ENCODE measurements at regions of chr1 and their contacts with region 1.

Region 1: DNA sequence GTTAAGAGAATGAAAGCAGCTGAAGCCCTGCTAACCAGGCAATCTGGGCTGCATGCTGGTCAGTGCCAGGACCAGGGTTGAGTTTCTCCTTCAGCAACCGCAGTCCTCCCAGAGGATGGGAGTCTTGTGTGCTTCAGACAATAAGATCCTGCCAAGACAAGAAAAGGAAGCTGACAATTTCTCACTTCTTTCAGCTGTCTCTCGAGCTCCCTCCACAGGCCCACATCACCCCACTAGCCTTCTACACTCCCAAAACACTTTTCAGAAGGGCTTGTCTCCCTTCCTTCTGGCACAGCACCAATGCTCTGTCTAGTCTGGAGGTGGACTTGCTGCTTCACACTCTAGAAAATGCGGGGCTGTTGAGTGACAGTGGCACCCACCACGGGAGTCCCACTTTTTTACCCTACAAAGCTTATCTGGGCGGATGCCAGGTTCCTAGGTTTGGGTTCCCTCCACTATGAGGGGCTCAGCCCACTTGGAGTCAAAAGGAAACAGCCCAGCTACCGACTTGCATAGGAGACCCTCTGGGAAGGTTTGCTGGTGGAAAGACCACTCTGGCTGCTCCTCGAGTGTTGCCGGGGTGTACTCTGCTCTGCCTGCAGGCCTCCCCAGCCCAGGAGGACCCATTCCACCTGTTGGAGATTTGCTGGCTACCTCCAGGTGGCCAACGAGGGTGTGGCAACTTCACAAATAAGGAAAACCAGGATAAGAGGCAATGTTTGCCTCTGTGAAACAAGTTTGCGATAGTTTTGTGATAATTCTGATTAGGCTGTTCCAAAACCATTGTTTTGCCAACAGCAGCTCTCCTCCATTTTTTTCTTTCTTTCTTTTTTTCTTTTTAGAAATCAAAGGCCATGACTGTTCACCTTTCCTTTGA is 68.9 kb downstream of the TENT5C start:
- DNase-seq: peak; percentile 22 to 42
- H3K4me3 ChIP-seq: no peak overlapping the region
- H3K27ac ChIP-seq: no peak overlapping the region
- H3K4me1 ChIP-seq: peaks cover 0 to 16% of the 10 kb centered on the region in 2 donors
- H3K27me3 ChIP-seq: no peaks in the 10 kb centered on the region
- CTCF ChIP-seq: peak in 2 of 6 experiments; percentile 19 to 32
- POLR2A ChIP-seq: no peak

Region 2: DNA sequence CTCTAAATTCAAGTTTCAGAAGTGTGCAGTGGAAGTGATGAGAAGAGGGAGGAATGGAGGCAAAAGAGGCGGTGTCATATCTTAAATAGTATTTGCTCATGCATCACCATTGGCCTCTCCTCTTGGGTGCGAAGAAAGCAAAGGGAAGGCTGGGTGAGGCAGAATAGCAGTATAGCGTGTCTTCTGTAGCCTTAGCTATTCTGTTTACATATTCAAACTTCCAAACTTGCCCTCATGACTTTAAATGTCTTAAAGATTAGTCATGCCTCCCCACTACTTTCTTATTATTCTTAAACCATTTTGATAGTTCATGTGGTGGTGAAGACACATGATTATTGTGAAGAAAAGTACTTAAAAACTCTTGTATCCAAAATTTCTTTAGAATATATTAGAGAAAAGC is 173.5 kb before region 1 on chr1:
- intact Hi-C with region 1: no loop called
- DNase-seq: no peak
- H3K4me3 ChIP-seq: no peak overlapping the region
- H3K27ac ChIP-seq: no peak overlapping the region
- H3K4me1 ChIP-seq: no peaks in the 10 kb centered on the region
- H3K27me3 ChIP-seq: no peaks in the 10 kb centered on the region
- CTCF ChIP-seq: no peak
- POLR2A ChIP-seq: no peak

Region 3: DNA sequence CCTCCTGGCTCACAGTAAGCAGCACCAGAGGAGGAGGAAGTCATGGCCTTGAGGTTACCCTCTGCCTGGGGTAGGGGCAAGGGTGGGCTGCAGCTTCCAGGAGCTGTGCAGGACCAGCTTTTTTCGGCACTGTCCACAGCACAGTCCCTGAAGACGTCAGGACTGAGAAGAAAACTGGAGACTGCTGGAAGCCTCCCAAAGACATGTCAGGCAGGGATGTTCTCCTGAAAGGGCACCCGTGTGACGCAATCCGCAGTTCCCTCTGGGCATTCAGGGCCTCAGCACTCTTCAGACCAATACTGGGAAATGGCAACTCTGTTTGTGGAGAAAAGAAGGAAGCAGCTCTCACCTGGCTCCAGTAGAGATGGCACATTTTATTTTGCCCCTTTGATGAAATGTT is 133.8 kb before region 1 on chr1:
- intact Hi-C with region 1: loop called (anchors 10 kb)
- DNase-seq: peak; percentile 29 to 30
- H3K4me3 ChIP-seq: no peak overlapping the region
- H3K27ac ChIP-seq: peak overlapping the region in 1 of 3 donors; percentile 27
- H3K4me1 ChIP-seq: peaks cover 10 to 13% of the 10 kb centered on the region in 2 donors
- H3K27me3 ChIP-seq: no peaks in the 10 kb centered on the region
- CTCF ChIP-seq: no peak
- POLR2A ChIP-seq: no peak